ENCODE measurements at regions of chr22 and their contacts with region 1.

Region 1: GRCh38 chr22:40425082-40425481 is 54.7 kb downstream of the SGSM3 start:
- DNase-seq: no peak
- H3K4me3 ChIP-seq: no peak overlapping the region
- H3K27ac ChIP-seq: no peak overlapping the region
- H3K4me1 ChIP-seq: peaks cover 0 to 6% (median under 1%) of the 10 kb centered on the region in 4 donors
- H3K27me3 ChIP-seq: no peaks in the 10 kb centered on the region
- CTCF ChIP-seq: no peak

Region 2: DNA sequence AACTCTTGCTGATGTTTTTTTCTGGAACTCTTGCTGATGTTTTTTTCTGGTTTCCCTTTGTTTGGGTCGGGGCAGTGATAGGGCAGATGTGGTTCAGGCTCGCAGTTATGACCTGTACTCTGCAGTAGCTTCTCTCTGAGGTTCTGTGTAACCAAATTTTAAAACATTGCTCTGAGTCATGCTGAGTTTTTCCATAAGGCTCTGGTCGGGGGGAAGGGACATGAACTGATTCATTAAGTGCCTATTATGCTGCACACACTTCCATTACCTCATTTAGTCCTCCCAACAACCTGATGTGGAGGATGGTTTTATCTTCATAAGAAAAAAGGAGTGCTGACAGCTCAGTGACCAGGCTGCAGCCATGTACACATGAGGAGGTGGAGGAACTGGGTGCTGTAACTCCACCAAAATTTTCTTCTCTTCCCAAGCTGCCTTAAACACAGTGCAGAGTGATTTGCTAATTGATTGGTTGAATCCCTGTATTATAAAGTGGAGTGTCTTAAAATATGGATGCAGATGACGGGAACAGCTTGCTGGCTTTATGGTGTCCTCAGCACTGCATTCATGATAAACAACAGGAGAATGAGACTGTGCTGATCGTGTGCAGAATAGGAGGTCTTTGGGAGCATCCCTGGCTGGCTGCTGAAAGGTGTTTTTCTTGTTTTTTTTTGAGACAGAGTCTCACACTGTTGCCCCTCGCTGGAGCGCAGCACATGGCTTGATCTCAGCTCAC is 228.3 kb before region 1 on chr22:
- intact Hi-C with region 1: no loop called
- DNase-seq: no peak
- H3K4me3 ChIP-seq: no peak overlapping the region
- H3K27ac ChIP-seq: peak overlapping the region in 1 of 2 donors; percentile 7
- H3K4me1 ChIP-seq: peaks cover 0 to 62% (median 27%) of the 10 kb centered on the region in 4 donors
- H3K27me3 ChIP-seq: no peaks in the 10 kb centered on the region
- CTCF ChIP-seq: no peak

Region 3: DNA sequence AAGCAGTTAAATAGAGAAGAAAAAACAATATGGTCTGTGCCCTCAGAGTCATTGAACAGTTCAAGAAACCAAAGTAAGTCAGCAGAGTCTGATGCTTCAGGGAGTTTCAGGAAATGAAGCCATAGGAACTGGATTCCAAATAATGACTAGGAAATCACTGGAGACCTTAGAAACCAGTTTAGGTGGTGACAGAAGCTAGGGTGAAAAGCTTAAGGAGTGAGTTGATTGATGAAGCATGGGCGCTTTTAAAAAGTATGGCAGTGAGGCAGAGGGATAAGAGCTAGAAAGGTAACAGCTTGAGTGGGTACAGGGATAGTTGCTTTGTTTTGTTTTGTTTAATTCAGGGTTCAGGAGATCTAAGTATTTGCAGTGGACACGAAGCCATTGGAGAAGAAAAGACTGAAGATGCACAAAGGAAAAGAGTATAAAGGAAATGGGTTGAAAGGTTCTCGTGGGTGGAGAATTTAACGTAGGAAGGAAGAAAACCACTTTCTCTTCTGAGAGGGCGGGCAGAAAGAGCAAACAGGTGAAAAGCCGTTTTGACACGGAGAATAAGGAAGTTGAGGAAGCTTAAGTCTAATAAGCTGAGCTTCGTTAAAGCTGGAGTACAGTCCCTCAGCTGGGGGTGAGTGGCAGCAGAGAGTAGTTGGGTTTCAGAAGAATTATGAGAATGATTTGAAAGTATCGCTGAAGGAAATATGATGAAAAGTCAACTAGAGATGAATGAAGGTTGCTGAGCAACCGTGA is 39.9 kb before region 1 on chr22:
- intact Hi-C with region 1: loop called (anchors 1 kb)
- DNase-seq: no peak
- H3K4me3 ChIP-seq: no peak overlapping the region
- H3K27ac ChIP-seq: no peak overlapping the region
- H3K4me1 ChIP-seq: peaks cover 0 to 14% (median 0%) of the 10 kb centered on the region in 4 donors
- H3K27me3 ChIP-seq: no peaks in the 10 kb centered on the region
- CTCF ChIP-seq: no peak

Measured in tibial artery (tissue), 4 donors.